GM18951 (cell line): ENCODE measurements at regions of chr18 and their contacts with region 1.

Region 1: GRCh38 chr18:47100214-47100831 is 50.0 kb downstream of the HDHD2 start:
- POLR2A ChIP-seq: no peak

Region 2: DNA sequence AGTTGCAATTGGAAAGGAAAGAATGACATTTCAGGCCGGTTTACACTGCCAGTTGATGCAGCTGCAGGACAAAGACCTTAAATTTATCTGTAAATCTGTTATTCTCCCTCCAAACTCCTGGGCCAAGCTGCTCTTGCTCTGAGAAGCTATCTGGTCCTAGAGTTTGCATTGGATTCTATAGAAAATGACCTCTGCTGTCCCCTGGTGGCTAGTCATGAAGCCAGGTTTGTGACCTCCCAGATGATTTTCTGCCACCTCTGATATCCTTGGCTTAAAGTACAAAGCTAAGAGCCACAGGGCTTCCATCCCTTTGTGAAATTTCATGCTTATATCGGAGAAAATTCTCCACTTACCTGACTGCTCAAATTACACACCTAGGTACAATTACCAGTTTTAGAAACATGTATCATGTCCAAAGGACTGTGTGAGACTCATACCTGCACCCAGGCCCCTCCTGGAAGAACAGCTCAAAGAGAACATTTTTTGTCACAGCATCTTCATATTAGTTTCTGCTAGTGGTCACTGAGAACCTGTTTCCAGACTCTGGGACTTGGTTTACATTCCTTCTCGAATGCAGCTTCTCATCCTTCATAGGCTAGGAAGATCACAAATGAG is 104.7 kb after region 1 on chr18:
- in situ Hi-C with region 1: loop called (anchors 10 kb)
- POLR2A ChIP-seq: no peak

Region 3: GRCh38 chr18:47756364-47757016 is 656.2 kb after region 1 on chr18:
- in situ Hi-C with region 1: loop called (anchors 25 kb)
- POLR2A ChIP-seq: no peak